ENCODE measurements at regions of chrX and their contacts with region 1.

Region 1: GRCh38 chrX:79096145-79096556 is 48.3 kb upstream of the GPR174 start:
- DNase-seq: peak; percentile 84
- H3K4me3 ChIP-seq: peak overlapping the region; percentile 6
- H3K27ac ChIP-seq: peak overlapping the region; percentile 100
- H3K4me1 ChIP-seq: peaks cover 51% of the 10 kb centered on the region
- H3K27me3 ChIP-seq: no peaks in the 10 kb centered on the region
- CTCF ChIP-seq: no peak

Region 2: DNA sequence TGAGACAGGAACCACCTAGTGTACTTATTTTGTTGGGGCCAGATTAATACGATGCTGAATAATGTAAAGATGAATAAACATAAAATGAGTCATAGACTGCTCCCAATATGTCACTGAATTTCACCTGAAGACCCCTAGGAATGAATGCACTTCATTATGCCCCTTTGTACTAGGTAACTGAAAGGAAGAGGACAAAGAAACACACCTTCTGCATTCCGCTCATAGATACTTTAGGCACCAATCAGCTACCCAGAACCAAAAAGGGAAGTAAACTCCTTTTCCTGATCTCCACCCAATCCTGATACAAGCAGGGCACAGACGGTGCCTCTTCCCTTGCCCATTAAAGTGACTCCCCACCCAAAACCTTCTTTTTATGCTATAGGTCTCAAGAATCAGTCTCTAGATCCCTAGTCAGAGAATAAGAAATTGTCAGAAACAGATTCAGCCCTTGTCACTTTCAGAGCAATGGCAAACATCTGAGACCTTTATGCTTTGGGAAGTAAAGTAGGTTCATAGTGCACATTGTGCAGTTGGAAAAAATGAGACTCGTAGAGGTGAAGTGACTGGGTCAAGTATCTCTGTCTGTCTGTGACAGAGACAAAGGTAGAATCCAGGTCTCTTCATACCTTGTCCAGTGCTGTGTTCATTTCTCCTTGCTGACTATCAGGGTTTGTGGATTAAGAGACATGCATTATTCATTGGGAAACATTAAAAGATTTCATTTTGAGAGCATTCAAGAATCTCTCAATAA is 50.7 kb after region 1 on chrX:
- CTCF ChIA-PET with region 1: interaction called, 3 read pairs
- POLR2A ChIA-PET with region 1: no interaction called
- intact Hi-C with region 1: loop called (anchors 2 kb)
- DNase-seq: peak; percentile 45
- H3K4me3 ChIP-seq: peak overlapping the region; percentile 56
- H3K27ac ChIP-seq: peak overlapping the region; percentile 77
- H3K4me1 ChIP-seq: peaks cover 14% of the 10 kb centered on the region
- H3K27me3 ChIP-seq: no peaks in the 10 kb centered on the region
- CTCF ChIP-seq: no peak

Region 3: DNA sequence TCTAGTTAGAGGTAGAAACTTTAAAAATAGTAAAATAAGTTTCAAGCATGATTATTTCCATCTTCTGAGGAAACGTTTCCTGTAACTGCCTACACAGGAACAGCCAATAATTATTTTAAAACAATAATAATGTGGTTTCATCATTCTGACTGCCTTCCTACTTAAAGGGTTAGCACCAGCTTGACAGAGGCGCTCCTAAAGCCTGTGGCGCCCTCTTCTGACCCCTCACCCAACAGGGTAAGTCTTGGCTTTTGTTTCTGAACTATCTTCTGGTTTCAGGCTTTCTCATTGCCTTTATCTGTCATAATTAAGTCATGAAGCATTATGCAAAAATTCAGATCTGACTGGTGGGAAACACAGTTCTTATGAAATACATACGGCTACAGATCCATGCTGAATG is 174.2 kb after region 1 on chrX:
- CTCF ChIA-PET with region 1: interaction called, 5 read pairs
- POLR2A ChIA-PET with region 1: no interaction called
- intact Hi-C with region 1: loop called (anchors 1 kb)
- DNase-seq: peak; percentile 92
- H3K4me3 ChIP-seq: no peak overlapping the region
- H3K27ac ChIP-seq: peak overlapping the region; percentile 90
- H3K4me1 ChIP-seq: peaks cover 50% of the 10 kb centered on the region
- H3K27me3 ChIP-seq: no peaks in the 10 kb centered on the region
- CTCF ChIP-seq: peak; percentile 78

Region 4: GRCh38 chrX:79336869-79337815 is 241.0 kb after region 1 on chrX:
- CTCF ChIA-PET with region 1: no interaction called
- POLR2A ChIA-PET with region 1: no interaction called
- intact Hi-C with region 1: loop called (anchors 1 kb)
- DNase-seq: peak; percentile 71
- H3K4me3 ChIP-seq: peak overlapping the region; percentile 29
- H3K27ac ChIP-seq: peak overlapping the region; percentile 88
- H3K4me1 ChIP-seq: peaks cover 12% of the 10 kb centered on the region
- H3K27me3 ChIP-seq: no peaks in the 10 kb centered on the region
- CTCF ChIP-seq: no peak

Region 5: DNA sequence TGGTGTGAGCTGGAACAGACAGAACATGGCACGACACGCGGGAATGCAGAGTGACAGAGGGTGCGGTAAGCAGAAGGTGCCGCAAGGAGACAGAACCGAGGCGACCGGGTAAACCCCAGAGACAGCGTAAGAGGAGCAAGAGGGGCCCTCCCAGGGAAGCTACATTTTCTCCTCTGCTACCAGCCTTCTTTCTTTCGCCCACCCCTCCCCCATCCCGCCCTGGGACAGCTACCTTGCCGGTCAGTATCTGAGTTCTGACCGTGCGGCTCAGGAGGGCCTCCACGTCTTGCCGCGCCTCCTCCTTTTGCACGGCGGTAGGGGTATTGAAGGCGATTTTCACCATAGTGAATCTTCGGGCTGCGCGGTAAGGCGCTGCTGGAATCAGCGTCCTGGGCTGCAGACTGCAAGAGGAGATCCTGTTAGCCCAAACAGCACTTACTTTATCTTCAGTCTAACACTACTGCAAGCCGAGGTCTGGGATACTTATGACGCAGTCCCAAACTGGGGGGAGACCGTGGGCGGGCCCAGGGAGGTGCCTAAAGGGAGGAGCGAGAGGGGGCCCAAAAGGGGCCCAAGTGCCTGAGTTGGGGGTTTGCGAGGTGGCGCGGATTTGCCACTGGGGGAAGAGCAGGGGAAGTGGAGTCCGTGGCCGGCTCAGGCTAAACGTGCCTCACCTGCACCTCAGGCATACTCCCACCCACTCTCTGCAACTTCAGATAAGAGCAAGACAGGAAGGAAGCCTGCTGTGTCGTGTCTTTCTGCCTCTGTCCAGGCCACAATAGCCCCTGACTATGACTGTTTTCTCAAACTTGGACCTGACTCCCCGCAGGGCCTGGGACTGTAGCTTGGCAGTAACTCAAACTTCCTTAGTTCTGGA is 271.0 kb after region 1 on chrX and contains the start of gene ITM2A:
- CTCF ChIA-PET with region 1: no interaction called
- POLR2A ChIA-PET with region 1: no interaction called
- intact Hi-C with region 1: loop called (anchors 10 kb)
- DNase-seq: peak; percentile 79
- H3K4me3 ChIP-seq: peak within 1 kb of the TSS; percentile 69
- H3K27ac ChIP-seq: peak within 1 kb of the TSS; percentile 79
- H3K4me1 ChIP-seq: no peaks in the 10 kb centered on the region
- H3K27me3 ChIP-seq: no peaks in the 10 kb centered on the region
- CTCF ChIP-seq: no peak
- total RNA-seq, gene ITM2A: 835 and 839 TPM in 2 replicates

Region 6: DNA sequence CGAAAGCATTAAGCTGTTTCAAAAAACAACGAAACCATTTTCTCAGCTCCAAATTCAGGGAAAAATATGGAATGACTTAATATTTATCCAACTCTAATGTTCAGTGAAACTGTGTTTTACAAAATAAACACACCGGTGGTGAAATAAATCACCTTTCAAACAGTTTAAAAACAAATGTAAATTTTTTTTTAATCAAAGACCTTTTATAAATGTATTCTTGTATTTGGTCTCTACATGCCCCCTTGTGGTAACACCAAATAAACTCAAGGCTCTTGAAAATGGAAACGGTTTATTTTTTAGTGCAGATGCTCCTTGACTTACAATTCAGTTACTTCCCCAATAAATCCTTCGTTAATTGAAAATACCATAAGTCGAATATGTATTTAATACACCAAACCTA is 316.8 kb after region 1 on chrX:
- CTCF ChIA-PET with region 1: no interaction called
- POLR2A ChIA-PET with region 1: no interaction called
- intact Hi-C with region 1: loop called (anchors 2 kb)
- DNase-seq: peak; percentile 73
- H3K4me3 ChIP-seq: peak overlapping the region; percentile 29
- H3K27ac ChIP-seq: peak overlapping the region; percentile 64
- H3K4me1 ChIP-seq: peaks cover 40% of the 10 kb centered on the region
- H3K27me3 ChIP-seq: no peaks in the 10 kb centered on the region
- CTCF ChIP-seq: peak; percentile 65

Region 7: DNA sequence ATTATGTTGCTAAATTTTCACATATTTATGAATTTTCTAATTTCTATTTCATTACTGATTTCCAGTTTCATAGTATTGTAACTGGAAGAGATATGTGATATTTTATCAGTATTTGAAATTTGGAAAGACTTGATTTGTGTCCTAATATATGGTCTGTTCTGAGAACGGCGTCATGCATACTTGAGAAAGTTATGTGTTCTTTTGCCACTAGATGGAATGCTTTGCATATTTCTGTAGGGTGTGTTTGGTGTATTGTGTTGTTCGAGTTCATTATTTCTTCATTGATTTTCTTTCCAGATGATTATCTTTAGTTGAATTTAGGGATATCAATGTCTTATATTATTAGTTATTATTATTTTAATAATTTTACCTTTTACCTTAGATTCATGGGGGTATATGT is 381.5 kb after region 1 on chrX:
- CTCF ChIA-PET with region 1: no interaction called
- POLR2A ChIA-PET with region 1: no interaction called
- intact Hi-C with region 1: no loop called
- DNase-seq: peak; percentile 23
- H3K4me3 ChIP-seq: no peak overlapping the region
- H3K27ac ChIP-seq: no peak overlapping the region
- H3K4me1 ChIP-seq: no peaks in the 10 kb centered on the region
- H3K27me3 ChIP-seq: no peaks in the 10 kb centered on the region
- CTCF ChIP-seq: peak; percentile 47; the same call in 1 of the 2 replicates